GM23248 (cell line): ENCODE measurements at regions of chr11 and their contacts with region 1.

Region 1: GRCh38 chr11:101127699-101128570 is 1.7 kb downstream of the PGR start:
- DNase-seq: peak; percentile 14
- H3K4me3 ChIP-seq: peak overlapping the region; percentile 70
- H3K27ac ChIP-seq: no peak overlapping the region
- H3K4me1 ChIP-seq: 0 out of 2 replicates have a peak, but pooled peaks cover 4% of the 10 kb centered on the region
- H3K27me3 ChIP-seq: peaks cover 76% of the 10 kb centered on the region

Region 2: GRCh38 chr11:100876815-100877520 is 251.0 kb before region 1 on chr11:
- in situ Hi-C with region 1: no loop called
- DNase-seq: peak; percentile 94
- H3K4me3 ChIP-seq: peak overlapping the region; percentile 47
- H3K27ac ChIP-seq: peak overlapping the region; percentile 82
- H3K4me1 ChIP-seq: peaks cover 38% of the 10 kb centered on the region
- H3K27me3 ChIP-seq: no peaks in the 10 kb centered on the region

Region 3: DNA sequence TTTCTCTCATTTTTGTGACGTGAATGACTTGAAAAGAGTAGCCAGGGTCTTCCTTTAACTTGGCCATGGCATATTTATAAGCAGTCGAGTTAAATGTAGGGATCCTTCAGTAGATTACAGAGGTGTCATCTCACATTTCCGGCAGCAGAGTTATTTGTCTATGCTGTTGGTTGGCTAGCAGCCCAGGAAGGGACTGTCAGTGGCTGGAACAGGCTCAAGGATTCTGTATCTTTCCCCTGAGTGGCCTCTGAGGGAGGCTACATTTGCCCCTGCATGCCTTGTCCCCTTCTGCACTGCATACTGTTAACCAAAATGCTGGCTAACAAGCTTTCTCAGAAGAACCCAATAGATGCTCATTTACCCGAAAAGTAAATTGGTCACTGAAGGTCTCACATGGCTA is 185.9 kb before region 1 on chr11:
- in situ Hi-C with region 1: no loop called
- DNase-seq: peak; percentile 10
- H3K4me3 ChIP-seq: no peak overlapping the region
- H3K27ac ChIP-seq: no peak overlapping the region
- H3K4me1 ChIP-seq: no peaks in the 10 kb centered on the region
- H3K27me3 ChIP-seq: no peaks in the 10 kb centered on the region

Region 4: GRCh38 chr11:101187748-101188147 is 59.8 kb after region 1 on chr11:
- in situ Hi-C with region 1: loop called (anchors 10 kb)
- DNase-seq: no peak
- H3K4me3 ChIP-seq: no peak overlapping the region
- H3K27ac ChIP-seq: no peak overlapping the region
- H3K4me1 ChIP-seq: no peaks in the 10 kb centered on the region
- H3K27me3 ChIP-seq: no peaks in the 10 kb centered on the region